Activated B cell treated with CpG ODN at 0.5 μM for 24 hours (primary cell): ENCODE measurements at regions of chr16 and their contacts with region 1.

Region 1: GRCh38 chr16:53822936-53823529 is 119.1 kb downstream of the FTO start:
- DNase-seq: no peak
- ATAC-seq: peak; percentile 66
- H3K4me3 Mint-ChIP-seq: no peak overlapping the region
- H3K27ac Mint-ChIP-seq: no peak overlapping the region
- H3K4me1 Mint-ChIP-seq: peaks cover 16% of the 10 kb centered on the region
- H3K27me3 Mint-ChIP-seq: no peaks in the 10 kb centered on the region
- CTCF ChIP-seq: no peak

Region 2: GRCh38 chr16:53743149-53743566 is 79.9 kb before region 1 on chr16:
- CTCF ChIA-PET with region 1: no interaction called
- POLR2A ChIA-PET with region 1: interaction called, 10 read pairs
- intact Hi-C with region 1: no loop called
- DNase-seq: no peak
- ATAC-seq: no peak
- H3K4me3 Mint-ChIP-seq: no peak overlapping the region
- H3K27ac Mint-ChIP-seq: no peak overlapping the region
- H3K4me1 Mint-ChIP-seq: peaks cover 38% of the 10 kb centered on the region
- H3K27me3 Mint-ChIP-seq: no peaks in the 10 kb centered on the region
- CTCF ChIP-seq: no peak